ENCODE measurements at regions of chr17 and their contacts with region 1.

Region 1: DNA sequence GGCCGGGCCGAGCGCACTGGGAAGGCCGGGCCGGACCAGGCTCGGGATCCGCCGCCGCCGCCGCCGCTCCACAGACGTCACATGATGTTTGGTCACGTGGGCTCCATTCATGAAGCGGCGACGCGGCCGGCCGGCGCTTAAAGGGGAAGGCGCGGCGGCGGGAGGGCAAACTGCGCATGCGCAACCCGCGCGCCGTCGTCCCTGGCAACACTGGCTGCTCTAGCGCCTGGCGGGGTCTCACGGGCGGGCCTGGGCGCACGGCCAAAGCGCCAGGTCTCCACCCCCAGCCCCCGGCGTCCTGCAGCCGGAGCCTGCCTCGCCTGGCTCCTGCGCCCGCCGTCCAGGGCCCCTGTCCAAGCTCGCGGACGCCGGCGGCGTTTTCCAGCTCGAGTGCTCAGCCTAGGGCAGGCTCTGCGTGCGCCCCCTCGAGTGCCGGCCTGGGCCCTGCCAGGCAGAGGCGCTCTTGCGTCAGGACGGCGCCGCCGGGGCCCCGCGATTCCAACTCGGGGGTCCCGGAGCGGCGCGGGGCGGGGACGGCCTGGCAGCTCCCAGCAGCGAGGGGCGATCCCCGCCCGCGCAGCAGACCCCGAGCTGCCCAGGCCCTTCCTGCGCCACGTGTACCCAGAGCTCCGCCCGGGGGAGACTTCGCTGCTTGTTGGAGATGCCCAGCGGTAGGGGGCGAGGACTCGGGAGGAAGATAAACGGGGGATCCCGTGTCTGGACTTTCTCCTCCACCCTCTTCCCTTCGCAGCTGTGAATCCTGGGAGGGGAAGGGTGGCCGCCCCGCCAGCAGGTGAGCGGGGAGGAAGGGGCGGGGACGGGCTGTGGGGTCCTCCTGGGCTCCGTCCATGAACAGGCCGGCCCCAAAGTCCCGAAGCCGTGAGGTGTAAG is at the start of gene MAFG:
- DNase-seq: peak; percentile 97
- ATAC-seq: peak; percentile 72
- H3K4me3 Mint-ChIP-seq: peak within 1 kb of the TSS; percentile 91
- H3K27ac Mint-ChIP-seq: peak within 1 kb of the TSS; percentile 88
- H3K4me1 Mint-ChIP-seq: peaks cover 16% of the 10 kb centered on the region
- H3K27me3 Mint-ChIP-seq: no peaks in the 10 kb centered on the region
- total RNA-seq, gene MAFG: 18.3 to 20.4 TPM

Region 2: GRCh38 chr17:81890447-81891299 is 37.2 kb before region 1 on chr17:
- POLR2A ChIA-PET with region 1: interaction called, 15 read pairs
- DNase-seq: peak; percentile 58
- ATAC-seq: no peak
- H3K4me3 Mint-ChIP-seq: peak overlapping the region; percentile 87
- H3K27ac Mint-ChIP-seq: peak overlapping the region; percentile 94
- H3K4me1 Mint-ChIP-seq: peaks cover 11% of the 10 kb centered on the region
- H3K27me3 Mint-ChIP-seq: no peaks in the 10 kb centered on the region

Region 3: GRCh38 chr17:81917565-81918332 is 10.1 kb before region 1 on chr17 and contains the start of gene SIRT7:
- POLR2A ChIA-PET with region 1: interaction called, 20 read pairs
- DNase-seq: peak; percentile 87
- ATAC-seq: peak; percentile 84
- H3K4me3 Mint-ChIP-seq: peak within 1 kb of the TSS; percentile 91
- H3K27ac Mint-ChIP-seq: peak within 1 kb of the TSS; percentile 86
- H3K4me1 Mint-ChIP-seq: peaks cover 17% of the 10 kb centered on the region
- H3K27me3 Mint-ChIP-seq: no peaks in the 10 kb centered on the region
- total RNA-seq, gene SIRT7: 64.8 to 65.2 TPM

Region 4: DNA sequence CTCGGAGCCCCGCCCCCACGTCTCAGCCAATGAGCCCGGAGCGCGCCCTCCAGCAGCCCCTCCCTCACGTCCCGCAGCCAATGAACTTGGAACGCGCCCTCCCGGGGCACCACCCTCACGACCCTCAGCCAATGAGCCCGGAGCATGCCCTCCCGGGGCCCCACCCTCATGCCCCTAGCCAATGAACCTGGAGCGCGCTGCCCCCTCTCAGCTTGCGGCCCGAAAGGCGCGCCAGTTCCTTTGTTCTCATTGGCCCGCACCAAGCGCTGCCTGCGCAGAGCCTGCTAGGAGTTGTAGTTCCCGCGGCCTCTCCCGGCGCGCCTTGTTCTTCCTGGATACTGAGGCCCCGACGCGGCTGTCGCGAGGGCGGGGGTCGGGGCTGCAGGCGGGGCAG is 95.1 kb after region 1 on chr17 and contains the start of gene LRRC45:
- POLR2A ChIA-PET with region 1: no interaction called
- DNase-seq: peak; percentile 100
- ATAC-seq: peak; percentile 94
- H3K4me3 Mint-ChIP-seq: peak within 1 kb of the TSS; percentile 86
- H3K27ac Mint-ChIP-seq: peak within 1 kb of the TSS; percentile 72
- H3K4me1 Mint-ChIP-seq: peaks cover 19% of the 10 kb centered on the region
- H3K27me3 Mint-ChIP-seq: no peaks in the 10 kb centered on the region
- total RNA-seq, gene LRRC45: 41.6 to 45.1 TPM

Measured in activated naive CD8-positive, alpha-beta T cell treated with anti-CD3 and anti-CD28 coated beads, Interleukin-2, amount 10 ng/mL, durations not matched to agents 7 days and 5 days (primary cell).